ENCODE measurements at regions of chr19 and their contacts with region 1.

Region 1: DNA sequence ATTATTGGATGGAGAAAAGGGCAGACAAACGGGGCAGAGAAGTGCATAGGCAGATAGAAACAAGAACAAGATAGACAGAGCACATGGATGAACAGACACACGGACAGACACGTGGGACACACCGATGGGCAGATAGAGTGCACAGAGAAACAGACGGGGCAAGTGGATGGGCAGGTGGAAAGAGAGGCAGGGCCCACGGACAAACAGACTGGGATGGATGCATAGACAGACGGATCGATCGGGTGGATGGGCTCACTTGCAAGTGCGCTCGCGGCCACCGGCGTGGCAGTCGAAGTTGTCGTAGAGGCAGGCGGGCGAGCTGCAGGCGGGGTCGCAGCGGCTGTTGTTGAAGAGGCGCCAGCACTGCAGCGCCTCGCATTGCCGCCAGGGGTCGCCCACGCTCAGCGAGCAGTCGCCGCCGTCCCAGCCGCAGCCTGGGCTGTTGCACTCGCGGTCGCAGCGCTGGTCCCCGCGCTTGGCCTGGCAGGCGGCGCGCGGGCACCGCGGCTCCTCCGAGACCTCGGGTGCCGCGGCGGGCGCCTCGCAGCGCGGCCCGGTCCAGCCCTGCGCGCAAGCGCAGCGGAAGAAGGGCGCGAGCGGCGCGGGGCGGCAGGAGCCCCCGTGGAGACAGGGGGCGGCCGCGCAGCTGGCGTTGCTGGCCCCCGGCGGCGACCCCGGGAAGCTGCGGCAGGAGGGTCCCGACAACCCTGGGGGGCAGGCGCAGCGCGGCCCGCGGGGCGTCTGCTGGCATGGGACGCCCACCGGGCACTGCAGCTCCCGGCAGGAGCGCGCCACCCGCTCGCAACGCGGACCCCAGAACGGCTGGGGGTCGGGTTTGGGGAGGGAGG is 23.3 kb downstream of the NOTCH3 start:
- DNase-seq: peak; percentile 78
- H3K4me3 ChIP-seq: peak overlapping the region in 1 of 3 experiments; percentile 13
- H3K27ac ChIP-seq: no peak overlapping the region
- H3K4me1 ChIP-seq: no peaks in the 10 kb centered on the region
- H3K27me3 ChIP-seq: no peaks in the 10 kb centered on the region
- CTCF ChIP-seq: peak; percentile 93 to 97
- POLR2A ChIP-seq: no peak

Region 2: GRCh38 chr19:15022752-15023151 is 154.7 kb before region 1 on chr19:
- CTCF ChIA-PET with region 1: no interaction called
- POLR2A ChIA-PET with region 1: no interaction called
- dilution Hi-C with region 1: no loop called
- intact Hi-C with region 1: no loop called
- DNase-seq: no peak
- H3K4me3 ChIP-seq: no peak overlapping the region
- H3K27ac ChIP-seq: no peak overlapping the region
- H3K4me1 ChIP-seq: no peaks in the 10 kb centered on the region
- H3K27me3 ChIP-seq: no peaks in the 10 kb centered on the region
- CTCF ChIP-seq: no peak
- POLR2A ChIP-seq: no peak

Region 3: GRCh38 chr19:15091901-15092753 is 85.4 kb before region 1 on chr19:
- CTCF ChIA-PET with region 1: interaction called, 41 read pairs
- POLR2A ChIA-PET with region 1: no interaction called
- dilution Hi-C with region 1: no loop called
- intact Hi-C with region 1: no loop called
- DNase-seq: peak; percentile 58
- H3K4me3 ChIP-seq: no peak overlapping the region
- H3K27ac ChIP-seq: no peak overlapping the region
- H3K4me1 ChIP-seq: no peaks in the 10 kb centered on the region
- H3K27me3 ChIP-seq: no peaks in the 10 kb centered on the region
- CTCF ChIP-seq: peak; percentile 55 to 60
- POLR2A ChIP-seq: no peak

Region 4: GRCh38 chr19:15222738-15223648 is 45.5 kb after region 1 on chr19:
- CTCF ChIA-PET with region 1: no interaction called
- POLR2A ChIA-PET with region 1: no interaction called
- dilution Hi-C with region 1: no loop called
- intact Hi-C with region 1: loop called (anchors 1 kb)
- DNase-seq: peak; percentile 93
- H3K4me3 ChIP-seq: peak overlapping the region; percentile 43 to 52 (median 44)
- H3K27ac ChIP-seq: no peak overlapping the region
- H3K4me1 ChIP-seq: peaks cover 9% of the 10 kb centered on the region
- H3K27me3 ChIP-seq: no peaks in the 10 kb centered on the region
- CTCF ChIP-seq: no peak
- POLR2A ChIP-seq: no peak

Region 5: DNA sequence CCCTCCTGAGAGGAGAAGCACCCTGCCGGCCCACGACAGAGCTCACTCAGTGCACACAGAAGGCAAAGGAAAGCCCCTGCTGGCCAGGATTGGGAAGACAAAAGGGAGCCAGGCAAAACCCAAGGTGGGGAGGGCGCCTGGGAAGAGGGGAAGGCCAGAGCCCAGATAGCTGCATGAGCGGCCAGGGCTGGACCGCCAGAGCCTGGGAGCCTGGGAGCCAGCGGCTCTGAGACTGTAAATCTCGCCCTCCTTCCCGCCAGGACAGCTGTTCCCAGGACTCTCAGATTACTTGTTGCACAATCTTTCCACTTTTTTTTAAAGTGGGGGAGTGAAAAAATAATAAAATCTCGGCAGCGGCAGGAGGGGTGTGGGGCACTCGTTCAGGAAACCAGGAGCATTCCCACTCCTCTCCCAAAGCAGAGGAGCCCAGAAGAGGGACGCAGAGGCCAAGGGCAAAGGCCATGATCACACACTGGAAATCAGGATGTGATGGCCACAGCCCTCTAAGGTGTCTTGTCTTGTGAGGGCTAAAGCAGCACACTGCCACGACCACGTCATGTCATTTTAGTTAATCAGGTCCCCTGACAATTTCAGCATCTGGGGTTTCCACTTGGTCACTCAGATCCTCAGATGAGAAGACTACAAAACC is 74.4 kb after region 1 on chr19:
- CTCF ChIA-PET with region 1: interaction called, 15 read pairs
- POLR2A ChIA-PET with region 1: no interaction called
- dilution Hi-C with region 1: no loop called
- intact Hi-C with region 1: loop called (anchors 1 kb)
- DNase-seq: peak; percentile 73
- H3K4me3 ChIP-seq: no peak overlapping the region
- H3K27ac ChIP-seq: peak overlapping the region; percentile 69
- H3K4me1 ChIP-seq: peaks cover 42% of the 10 kb centered on the region
- H3K27me3 ChIP-seq: no peaks in the 10 kb centered on the region
- CTCF ChIP-seq: peak; percentile 56 to 60
- POLR2A ChIP-seq: no peak

Region 6: GRCh38 chr19:15331419-15332310 is 154.2 kb after region 1 on chr19:
- CTCF ChIA-PET with region 1: no interaction called
- POLR2A ChIA-PET with region 1: no interaction called
- dilution Hi-C with region 1: no loop called
- intact Hi-C with region 1: loop called (anchors 2 kb)
- DNase-seq: no peak
- H3K4me3 ChIP-seq: peak overlapping the region; percentile 74 to 92 (median 82)
- H3K27ac ChIP-seq: peak overlapping the region; percentile 86
- H3K4me1 ChIP-seq: peaks cover 24% of the 10 kb centered on the region
- H3K27me3 ChIP-seq: no peaks in the 10 kb centered on the region
- CTCF ChIP-seq: no peak
- POLR2A ChIP-seq: no peak

Region 7: DNA sequence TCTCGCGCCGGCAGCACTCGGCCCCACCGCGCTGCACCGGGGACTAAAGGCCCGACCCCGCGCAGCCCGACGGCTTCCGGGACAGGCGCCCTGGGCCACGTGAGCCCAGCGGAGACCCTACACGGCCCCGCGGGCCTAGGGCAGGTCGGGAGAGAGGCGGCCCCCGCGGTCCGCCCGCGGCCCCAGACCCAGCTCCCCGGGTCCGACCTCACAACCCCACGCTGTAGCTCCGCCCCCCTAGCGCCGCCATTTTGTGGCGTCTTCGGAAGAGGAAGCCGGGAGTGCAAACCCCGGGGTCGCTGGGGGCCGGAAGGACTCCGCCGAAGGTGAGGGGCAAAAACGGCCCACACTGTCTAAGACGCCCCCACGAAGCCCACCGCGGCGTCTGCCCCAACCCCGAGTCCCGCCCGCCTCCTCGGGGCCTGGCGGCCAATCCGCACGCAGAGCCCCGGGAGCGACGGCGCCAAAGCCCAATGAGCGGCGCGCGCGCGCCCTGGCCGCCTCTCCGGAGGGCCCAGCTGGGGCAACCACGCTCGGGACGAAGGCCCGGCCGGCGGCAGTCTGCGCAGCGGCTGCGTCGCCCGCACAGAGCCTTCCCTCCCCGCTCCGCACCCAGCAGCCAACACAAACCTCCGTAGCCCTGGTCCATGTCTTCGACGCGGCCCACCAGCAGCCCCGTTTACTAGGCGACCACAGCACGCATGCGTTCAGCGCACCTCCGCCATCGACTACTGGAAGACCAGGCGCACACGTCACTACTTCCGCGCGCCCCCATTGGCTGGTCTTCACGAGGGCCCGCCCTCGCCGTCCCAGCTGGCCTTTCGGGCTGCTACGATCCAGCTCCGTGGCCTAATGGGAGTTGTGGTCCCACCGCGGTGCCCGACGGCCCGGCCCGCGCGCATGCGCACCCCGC is 201.8 kb after region 1 on chr19 and contains the start of gene AKAP8:
- CTCF ChIA-PET with region 1: interaction called, 8 read pairs
- POLR2A ChIA-PET with region 1: no interaction called
- dilution Hi-C with region 1: no loop called
- intact Hi-C with region 1: loop called (anchors 1 kb)
- DNase-seq: peak; percentile 99
- H3K4me3 ChIP-seq: peak within 1 kb of the TSS; percentile 82 to 90 (median 85)
- H3K27ac ChIP-seq: peak within 1 kb of the TSS; percentile 85
- H3K4me1 ChIP-seq: peaks cover 20% of the 10 kb centered on the region
- H3K27me3 ChIP-seq: no peaks in the 10 kb centered on the region
- CTCF ChIP-seq: no peak
- POLR2A ChIP-seq: peak; percentile 85
- total RNA-seq, gene AKAP8: 42.6 and 44.1 TPM in 2 replicates